HCT116 (cell line): ENCODE measurements at regions of chr9 and their contacts with region 1.

Region 1: DNA sequence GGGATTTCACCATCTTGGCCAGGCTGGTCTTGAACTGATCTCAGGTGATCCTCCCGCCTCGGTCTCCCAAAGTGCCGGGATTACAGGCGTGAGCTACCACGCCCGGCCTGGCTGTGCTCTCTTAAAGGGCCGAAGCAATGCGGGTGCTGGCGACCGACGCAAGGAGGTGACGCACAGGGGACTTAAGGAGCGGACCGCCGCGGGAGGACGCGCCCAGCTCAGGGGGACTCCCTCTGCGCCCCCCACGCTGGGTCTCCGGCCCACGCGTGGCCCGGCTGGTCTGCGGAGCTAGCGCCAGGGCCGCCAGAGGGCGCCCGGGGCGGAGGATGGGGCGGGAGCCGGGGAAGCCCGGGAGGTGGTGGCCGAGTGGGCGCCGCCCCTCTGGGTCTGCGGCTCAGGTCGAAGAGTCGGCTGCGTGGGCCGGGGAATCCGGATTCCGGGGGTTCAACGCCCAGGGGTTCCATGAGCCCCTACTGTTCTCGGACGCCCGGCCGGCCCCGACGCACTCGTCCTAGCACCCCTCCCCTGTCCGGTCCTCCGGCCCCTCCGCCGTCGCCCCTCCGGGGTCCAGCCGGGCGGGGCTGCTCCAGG is 502 bp upstream of the CERCAM start:
- DNase-seq: no peak
- ATAC-seq: peak; percentile 81
- H3K4me3 ChIP-seq: peak overlapping the region; percentile 79 to 93
- H3K27ac ChIP-seq: peak overlapping the region; percentile 78
- H3K4me1 ChIP-seq: peaks cover 31 to 51% of the 10 kb centered on the region in 2 experiments
- H3K27me3 ChIP-seq: no peaks in the 10 kb centered on the region
- CTCF ChIP-seq: peak in 2 of 3 experiments; percentile 78 to 80; a peak in 4 of 6 replicates
- POLR2A ChIP-seq: peak; percentile 18
- RAD21 ChIP-seq: no peak

Region 2: GRCh38 chr9:128438343-128439109 is 18.4 kb after region 1 on chr9:
- CTCF ChIA-PET with region 1: interaction called, 21 read pairs
- POLR2A ChIA-PET with region 1: interaction called, 3 read pairs
- RAD21 ChIA-PET with region 1: interaction called in 1 of 2 experiments, 3 read pairs
- intact Hi-C with region 1: no loop called
- DNase-seq: no peak
- ATAC-seq: peak; percentile 97
- H3K4me3 ChIP-seq: no peak overlapping the region
- H3K27ac ChIP-seq: peak overlapping the region; percentile 41; the same call in 1 of the 2 replicates
- H3K4me1 ChIP-seq: peaks cover 2 to 10% of the 10 kb centered on the region in 2 experiments; a peak in 2 of 4 replicates
- H3K27me3 ChIP-seq: no peaks in the 10 kb centered on the region
- CTCF ChIP-seq: peak; percentile 67 to 96 (median 92)
- POLR2A ChIP-seq: no peak
- RAD21 ChIP-seq: peak; percentile 80